Cardiac septum (tissue), 1 donor: ENCODE measurements at regions of chr3 and their contacts with region 1.

Region 1: GRCh38 chr3:141875374-141875892 is 1.0 kb upstream of the ATP1B3 start:
- DNase-seq: peak; percentile 93

Region 2: DNA sequence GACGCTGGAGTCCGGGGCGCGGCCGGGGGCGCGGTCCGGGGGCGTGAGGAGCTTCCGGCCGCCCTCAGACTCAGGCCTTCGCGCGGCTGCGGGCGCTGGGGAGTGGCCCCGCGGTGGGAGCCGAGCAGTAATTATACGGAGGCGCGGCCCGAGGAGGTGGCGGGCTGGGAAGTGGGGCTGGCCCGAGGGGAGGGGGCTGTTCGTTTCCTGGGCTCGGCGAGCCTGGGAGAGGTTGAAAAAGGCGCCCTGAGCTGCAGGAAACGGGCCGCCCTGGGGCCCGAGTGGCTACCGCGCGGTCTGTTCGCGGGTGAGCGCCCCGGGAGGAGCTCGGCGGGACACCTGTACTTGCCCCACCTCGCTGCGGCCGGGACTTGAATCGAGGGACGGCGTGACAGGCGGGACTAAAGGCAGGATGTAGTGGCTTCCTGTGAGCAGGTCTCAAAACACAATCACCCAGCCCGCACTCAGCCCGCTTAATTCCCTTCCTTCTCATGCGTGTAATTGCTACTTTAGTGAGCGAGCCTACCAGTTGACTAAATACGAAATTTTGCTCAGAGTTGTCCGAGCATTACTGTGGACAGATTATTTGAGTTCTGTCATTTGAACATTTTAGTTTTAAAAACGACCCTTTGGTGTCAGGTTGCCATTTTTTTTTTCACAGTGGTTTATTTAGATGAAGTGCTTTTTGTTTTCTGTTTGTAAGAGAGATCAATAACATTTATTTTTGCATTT is 387.7 kb before region 1 on chr3:
- intact Hi-C with region 1: loop called (anchors 10 kb)
- DNase-seq: peak; percentile 89

Region 3: GRCh38 chr3:141575879-141576743 is 299.3 kb before region 1 on chr3:
- intact Hi-C with region 1: loop called (anchors 10 kb)
- DNase-seq: no peak

Region 4: GRCh38 chr3:141605883-141606282 is 269.6 kb before region 1 on chr3:
- intact Hi-C with region 1: no loop called
- DNase-seq: no peak